Activated T-helper 2 cell treated with anti-CD3 and anti-CD28 coated beads, Interferon-gamma antibody, Interleukin-2, Interleukin-4, amounts not matched to agents 10 μg/mL and 5 μg/mL and 100 μg/mL, durations not matched to agents 14 hours and 24 hours and 36 hours (primary cell): ENCODE measurements at regions of chr10 and their contacts with region 1.

Region 1: DNA sequence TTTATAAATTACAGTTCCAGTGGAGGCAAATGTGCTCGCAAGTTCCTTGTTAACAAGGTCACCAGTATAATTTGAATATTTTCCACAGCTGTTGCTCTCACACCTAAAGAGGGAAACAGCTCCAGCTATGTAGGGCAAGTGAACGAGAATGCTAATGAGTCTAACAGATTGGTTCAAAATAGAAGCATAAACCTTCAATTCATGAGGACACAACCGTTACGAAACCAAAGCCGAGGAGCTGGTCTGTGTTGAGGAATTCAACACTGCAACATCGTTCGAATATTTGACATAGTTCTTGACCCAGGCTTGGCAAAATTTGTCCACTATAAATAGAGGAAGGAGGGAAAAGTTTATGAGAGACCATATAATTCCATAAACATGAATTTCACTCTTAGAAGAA is 161.3 kb downstream of the KLF6 start:
- DNase-seq: no peak
- H3K4me3 Mint-ChIP-seq: no peak overlapping the region
- H3K27ac Mint-ChIP-seq: no peak overlapping the region
- H3K4me1 Mint-ChIP-seq: peaks cover 28% of the 10 kb centered on the region
- H3K27me3 Mint-ChIP-seq: peaks cover 17% of the 10 kb centered on the region

Region 2: GRCh38 chr10:3467052-3467951 is 156.4 kb before region 1 on chr10:
- intact Hi-C with region 1: loop called (anchors 2 kb)
- DNase-seq: no peak
- H3K4me3 Mint-ChIP-seq: peak overlapping the region; percentile 73
- H3K27ac Mint-ChIP-seq: peak overlapping the region; percentile 92
- H3K4me1 Mint-ChIP-seq: peaks cover 63% of the 10 kb centered on the region
- H3K27me3 Mint-ChIP-seq: no peaks in the 10 kb centered on the region

Region 3: GRCh38 chr10:3714531-3714930 is 90.8 kb after region 1 on chr10:
- intact Hi-C with region 1: no loop called
- DNase-seq: no peak
- H3K4me3 Mint-ChIP-seq: no peak overlapping the region
- H3K27ac Mint-ChIP-seq: no peak overlapping the region
- H3K4me1 Mint-ChIP-seq: peaks cover 3% of the 10 kb centered on the region
- H3K27me3 Mint-ChIP-seq: peaks cover 5% of the 10 kb centered on the region

Region 4: GRCh38 chr10:3740157-3740871 is 116.6 kb after region 1 on chr10:
- intact Hi-C with region 1: loop called (anchors 1 kb)
- DNase-seq: no peak
- H3K4me3 Mint-ChIP-seq: no peak overlapping the region
- H3K27ac Mint-ChIP-seq: no peak overlapping the region
- H3K4me1 Mint-ChIP-seq: peaks cover 27% of the 10 kb centered on the region
- H3K27me3 Mint-ChIP-seq: peaks cover 5% of the 10 kb centered on the region

Region 5: DNA sequence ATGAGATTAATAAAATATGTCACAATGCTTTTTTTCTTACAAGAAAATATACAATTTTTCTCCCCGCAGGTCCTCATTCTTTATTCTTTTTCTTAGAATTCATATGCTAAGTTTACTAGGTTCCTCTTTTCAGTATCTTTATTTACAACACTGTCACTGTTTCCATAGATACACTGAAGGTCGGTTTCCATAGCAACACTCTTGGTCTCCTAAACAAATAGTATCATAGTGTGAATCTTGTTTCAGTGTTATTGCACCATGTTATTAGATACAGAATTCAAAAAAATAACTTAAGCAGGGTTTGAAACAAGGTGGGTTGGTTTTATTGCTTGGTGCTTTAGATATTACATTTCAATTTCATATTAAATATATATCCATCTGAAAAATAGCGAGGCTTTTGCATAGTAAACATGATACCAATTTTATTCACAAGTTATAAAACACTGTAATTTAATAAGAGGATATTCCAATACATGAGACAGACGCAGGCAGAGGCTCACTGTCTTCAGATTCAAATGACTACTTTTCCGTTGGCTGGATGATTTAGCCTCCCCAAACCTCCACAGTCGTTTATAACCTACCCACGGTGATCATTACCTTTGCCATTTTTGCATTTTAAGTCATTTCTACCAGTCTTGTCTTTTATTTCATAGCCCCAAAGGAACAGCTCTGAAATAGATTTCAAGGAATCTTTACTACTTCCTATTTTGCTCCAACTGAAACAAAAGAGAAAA is 250.1 kb after region 1 on chr10:
- intact Hi-C with region 1: loop called (anchors 2 kb)
- DNase-seq: no peak
- H3K4me3 Mint-ChIP-seq: no peak overlapping the region
- H3K27ac Mint-ChIP-seq: peak overlapping the region; percentile 84
- H3K4me1 Mint-ChIP-seq: peaks cover 55% of the 10 kb centered on the region
- H3K27me3 Mint-ChIP-seq: no peaks in the 10 kb centered on the region

Region 6: DNA sequence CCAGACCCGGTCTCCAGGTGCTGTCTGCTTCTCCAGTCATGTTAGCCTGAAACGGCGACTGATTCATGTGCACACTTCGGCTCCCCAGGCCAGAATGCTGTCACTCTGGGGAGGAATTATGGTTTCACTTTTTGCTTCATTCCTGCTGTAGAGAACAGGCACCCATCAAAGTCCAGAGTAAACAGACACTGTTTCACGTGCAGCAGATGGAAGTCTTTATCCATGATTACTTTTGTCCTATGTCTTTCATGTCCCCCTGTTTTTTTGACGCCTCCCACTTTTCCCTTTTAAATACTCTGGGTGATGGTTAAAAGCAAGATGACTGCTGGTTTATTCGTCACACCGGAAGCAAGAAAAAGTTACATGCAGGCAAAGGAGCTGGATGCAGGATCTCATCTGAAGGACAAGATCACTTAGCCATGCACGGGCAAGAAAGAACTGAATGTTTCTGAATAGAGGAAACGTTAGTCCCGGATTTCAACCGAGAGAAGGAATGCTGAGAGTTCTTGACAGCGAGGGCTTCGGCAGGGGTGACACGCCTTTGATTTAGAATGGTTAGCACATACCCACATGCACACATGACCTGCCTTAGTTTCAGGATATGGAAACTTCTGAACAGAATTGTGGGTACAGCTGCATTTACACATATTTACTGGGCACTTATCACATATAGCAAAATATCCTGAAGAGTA is 411.3 kb after region 1 on chr10:
- intact Hi-C with region 1: loop called (anchors 1 kb)
- DNase-seq: peak; percentile 15
- H3K4me3 Mint-ChIP-seq: peak overlapping the region; percentile 61
- H3K27ac Mint-ChIP-seq: peak overlapping the region; percentile 84
- H3K4me1 Mint-ChIP-seq: peaks cover 36% of the 10 kb centered on the region
- H3K27me3 Mint-ChIP-seq: peaks cover 2% of the 10 kb centered on the region